IMR-90 (cell line): ENCODE measurements at regions of chr10 and their contacts with region 1.

Region 1: GRCh38 chr10:95246579-95247051 is 44.2 kb downstream of the PDLIM1 start:
- DNase-seq: peak; percentile 81
- ATAC-seq: peak; percentile 52
- H3K4me3 ChIP-seq: no peak overlapping the region
- H3K27ac ChIP-seq: peak overlapping the region; percentile 86
- H3K4me1 ChIP-seq: peaks cover 30% of the 10 kb centered on the region
- H3K27me3 ChIP-seq: no peaks in the 10 kb centered on the region
- CTCF ChIP-seq: peak; percentile 77
- POLR2A ChIP-seq: 0 out of 2 replicates have a peak, but pooled peaks have one; percentile 39
- RAD21 ChIP-seq: peak; percentile 90

Region 2: GRCh38 chr10:95201736-95202135 is 44.9 kb before region 1 on chr10:
- CTCF ChIA-PET with region 1: interaction called, 15 read pairs
- POLR2A ChIA-PET with region 1: no interaction called
- dilution Hi-C with region 1: no loop called
- in situ Hi-C with region 1: no loop called
- intact Hi-C with region 1: loop called (anchors 1 kb)
- DNase-seq: peak; percentile 59
- ATAC-seq: peak; percentile 92
- H3K4me3 ChIP-seq: no peak overlapping the region
- H3K27ac ChIP-seq: no peak overlapping the region
- H3K4me1 ChIP-seq: no peaks in the 10 kb centered on the region
- H3K27me3 ChIP-seq: no peaks in the 10 kb centered on the region
- CTCF ChIP-seq: peak; percentile 70
- POLR2A ChIP-seq: no peak
- RAD21 ChIP-seq: peak; percentile 80

Region 3: DNA sequence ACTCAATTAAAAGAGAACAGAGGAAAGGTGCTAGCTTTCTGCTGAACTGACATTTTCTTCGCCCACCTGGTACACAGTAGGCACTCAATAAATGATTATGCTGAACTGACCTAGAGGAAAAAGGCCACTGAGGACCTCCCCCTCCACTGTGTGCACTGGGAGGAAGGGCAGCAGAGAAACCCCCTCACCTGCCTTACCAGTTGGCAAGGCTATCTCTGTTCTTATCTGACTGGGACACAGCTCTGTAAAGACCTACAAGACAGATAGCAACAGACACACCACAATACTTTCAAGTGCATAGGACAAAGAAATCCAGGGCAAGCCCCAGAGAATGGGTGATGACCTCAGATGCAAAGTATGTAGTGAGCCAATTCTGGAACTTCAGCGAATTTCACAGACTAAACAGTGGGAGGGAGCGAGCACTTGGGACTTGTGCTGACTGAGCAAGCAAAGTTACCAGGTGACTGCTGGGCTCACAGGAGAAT is 13.8 kb after region 1 on chr10:
- CTCF ChIA-PET with region 1: interaction called, 10 read pairs
- POLR2A ChIA-PET with region 1: no interaction called
- dilution Hi-C with region 1: no loop called
- in situ Hi-C with region 1: no loop called
- intact Hi-C with region 1: no loop called
- DNase-seq: peak; percentile 94
- ATAC-seq: peak; percentile 86
- H3K4me3 ChIP-seq: no peak overlapping the region
- H3K27ac ChIP-seq: peak overlapping the region; percentile 52
- H3K4me1 ChIP-seq: peaks cover 18% of the 10 kb centered on the region
- H3K27me3 ChIP-seq: no peaks in the 10 kb centered on the region
- CTCF ChIP-seq: no peak
- POLR2A ChIP-seq: no peak
- RAD21 ChIP-seq: no peak

Region 4: DNA sequence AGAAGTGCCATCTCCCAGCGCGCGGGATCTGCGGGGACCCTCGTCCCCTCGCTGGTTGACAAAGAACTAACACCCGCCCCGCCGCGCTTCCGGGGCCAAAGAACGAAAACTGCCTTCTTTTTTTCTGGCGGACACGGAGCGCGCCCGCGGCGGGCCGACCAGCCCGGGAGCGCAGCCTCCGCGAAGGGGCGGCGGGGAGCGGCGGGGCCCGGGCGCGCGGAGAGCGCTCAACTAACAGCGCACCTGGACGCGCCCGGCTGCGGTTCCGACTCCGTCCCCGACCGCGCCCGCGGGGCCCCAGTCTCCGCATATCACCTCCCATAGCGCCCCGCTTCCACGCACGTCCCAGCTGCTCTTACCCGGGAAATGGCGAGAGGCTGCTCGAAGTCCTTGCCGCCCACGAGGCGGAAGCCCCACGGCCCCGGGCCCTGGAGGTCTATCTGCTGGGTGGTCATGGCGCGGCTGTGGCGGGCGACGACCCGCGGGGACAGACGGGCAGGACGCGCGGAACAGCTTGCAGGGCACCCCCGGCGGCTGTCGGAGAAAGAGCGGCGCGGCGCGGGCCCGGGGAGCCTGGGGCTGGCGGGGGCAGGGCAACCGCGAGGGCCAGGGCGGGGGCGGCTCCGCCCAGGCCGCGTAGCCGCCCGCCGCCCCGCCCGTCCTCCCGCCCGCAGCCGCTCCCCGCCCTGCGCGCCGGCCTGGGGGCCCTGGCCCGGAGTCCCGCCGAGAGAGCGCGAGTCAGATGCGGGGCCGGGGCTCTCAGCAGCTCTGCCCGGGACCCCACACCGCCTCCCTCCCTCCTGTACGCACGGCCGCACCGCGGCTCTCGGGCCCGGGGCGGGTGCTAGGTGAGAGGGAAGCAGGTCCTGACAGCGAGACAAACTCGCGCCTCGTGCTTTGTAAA is 44.1 kb after region 1 on chr10 and contains the start of gene PDLIM1:
- CTCF ChIA-PET with region 1: interaction called, 7 read pairs
- POLR2A ChIA-PET with region 1: no interaction called
- dilution Hi-C with region 1: no loop called
- in situ Hi-C with region 1: no loop called
- intact Hi-C with region 1: loop called (anchors 1 kb)
- DNase-seq: peak; percentile 45
- ATAC-seq: peak; percentile 88
- H3K4me3 ChIP-seq: peak within 1 kb of the TSS; percentile 98
- H3K27ac ChIP-seq: peak within 1 kb of the TSS; percentile 94
- H3K4me1 ChIP-seq: peaks cover 15% of the 10 kb centered on the region
- H3K27me3 ChIP-seq: no peaks in the 10 kb centered on the region
- CTCF ChIP-seq: peak; percentile 30
- POLR2A ChIP-seq: peak; percentile 80
- RAD21 ChIP-seq: no peak
- total RNA-seq, gene PDLIM1: 27.5 and 30.1 TPM in 2 replicates

Region 5: GRCh38 chr10:95319239-95319638 is 72.6 kb after region 1 on chr10:
- CTCF ChIA-PET with region 1: no interaction called
- POLR2A ChIA-PET with region 1: no interaction called
- dilution Hi-C with region 1: no loop called
- in situ Hi-C with region 1: no loop called
- intact Hi-C with region 1: no loop called
- DNase-seq: peak; percentile 33
- ATAC-seq: peak; percentile 74
- H3K4me3 ChIP-seq: no peak overlapping the region
- H3K27ac ChIP-seq: no peak overlapping the region
- H3K4me1 ChIP-seq: peaks cover 9% of the 10 kb centered on the region
- H3K27me3 ChIP-seq: peaks cover 2% of the 10 kb centered on the region; the same call in 1 of the 2 replicates
- CTCF ChIP-seq: no peak
- POLR2A ChIP-seq: no peak
- RAD21 ChIP-seq: no peak

Region 6: GRCh38 chr10:95601116-95601719 is 354.6 kb after region 1 on chr10:
- CTCF ChIA-PET with region 1: no interaction called
- POLR2A ChIA-PET with region 1: no interaction called
- dilution Hi-C with region 1: no loop called
- in situ Hi-C with region 1: no loop called
- intact Hi-C with region 1: loop called (anchors 2 kb)
- DNase-seq: peak; percentile 84
- ATAC-seq: peak; percentile 96
- H3K4me3 ChIP-seq: no peak overlapping the region
- H3K27ac ChIP-seq: no peak overlapping the region
- H3K4me1 ChIP-seq: no peaks in the 10 kb centered on the region
- H3K27me3 ChIP-seq: peaks cover 2% of the 10 kb centered on the region; the same call in 1 of the 2 replicates
- CTCF ChIP-seq: peak; percentile 96
- POLR2A ChIP-seq: peak; percentile 52; the same call in 1 of the 2 replicates
- RAD21 ChIP-seq: peak; percentile 97